Astrocyte of the cerebellum (primary cell): ENCODE measurements at regions of chr17 and their contacts with region 1.

Region 1: GRCh38 chr17:82897514-82898249 is 57.9 kb upstream of the ZNF750 start:
- DNase-seq: no peak
- H3K4me3 ChIP-seq: no peak overlapping the region
- CTCF ChIP-seq: no peak

Region 2: DNA sequence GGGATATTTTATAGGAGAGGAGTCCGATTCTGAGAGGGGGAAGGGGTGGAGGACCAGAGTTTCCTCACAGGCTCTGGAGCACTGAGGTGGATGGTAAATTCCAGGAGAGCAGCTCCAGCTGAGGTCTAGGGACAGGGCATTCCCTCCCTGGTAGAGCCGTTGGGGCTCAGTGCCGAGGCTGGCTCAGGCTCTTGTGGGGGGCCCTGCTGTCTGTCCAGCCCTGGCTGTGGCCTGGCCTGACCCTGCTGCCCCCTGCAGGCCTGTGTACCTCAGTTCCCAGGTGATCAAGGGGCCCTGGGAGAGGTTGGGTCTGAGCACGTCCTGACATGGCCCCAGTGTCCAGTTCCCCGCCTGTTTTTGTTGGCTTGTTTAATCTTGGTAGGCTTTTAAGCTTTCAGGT is 74.7 kb before region 1 on chr17:
- in situ Hi-C with region 1: loop called (anchors 5 kb)
- DNase-seq: no peak
- H3K4me3 ChIP-seq: no peak overlapping the region
- CTCF ChIP-seq: peak; percentile 21

Region 3: DNA sequence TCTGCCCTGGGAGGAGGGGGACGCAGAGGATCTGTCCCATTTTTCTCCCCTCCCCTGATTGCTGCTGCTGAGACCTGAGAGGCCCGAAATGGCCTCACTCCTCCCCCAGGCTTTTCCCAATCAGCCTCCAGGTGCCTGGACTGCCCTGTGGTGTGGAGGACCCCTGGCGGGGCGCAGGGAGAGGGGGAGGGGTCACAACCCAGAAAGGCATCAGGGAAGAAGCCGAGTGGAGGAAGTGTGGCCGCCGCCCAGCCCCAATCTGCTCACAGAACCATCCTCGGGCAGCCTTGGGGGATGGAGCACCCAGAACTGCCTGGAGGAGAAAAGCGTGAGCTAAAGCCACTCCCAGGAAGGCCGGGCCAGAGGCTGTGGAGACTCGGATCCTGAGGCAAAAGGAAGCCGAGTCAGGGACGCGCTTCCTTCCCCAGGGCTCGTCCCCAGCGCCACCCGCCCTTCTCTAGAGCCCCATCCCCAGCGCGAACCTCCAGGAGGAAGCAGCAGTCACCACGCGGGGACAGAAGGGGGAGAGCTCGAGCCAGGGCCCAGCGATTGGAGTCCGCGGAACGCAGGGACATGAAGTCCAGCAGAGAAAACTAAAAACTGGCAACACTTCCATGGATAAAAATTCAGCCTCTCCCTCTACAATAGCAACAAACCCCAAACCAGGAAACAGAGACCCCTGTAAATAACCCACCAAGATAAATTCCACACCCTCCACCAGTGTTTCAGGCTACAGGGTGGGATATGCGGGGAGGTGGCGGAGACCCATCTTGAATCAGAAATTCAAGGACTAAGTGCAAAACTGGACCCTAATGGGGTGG is 65.4 kb after region 1 on chr17:
- in situ Hi-C with region 1: no loop called
- DNase-seq: peak; percentile 51
- H3K4me3 ChIP-seq: peak overlapping the region; percentile 2
- CTCF ChIP-seq: peak; percentile 89